H1 (cell line): ENCODE measurements at regions of chr1 and their contacts with region 1.

Region 1: GRCh38 chr1:14553711-14554110 is 44.8 kb upstream of the KAZN start:
- DNase-seq: no peak
- H3K4me3 ChIP-seq: no peak overlapping the region
- H3K27ac ChIP-seq: no peak overlapping the region
- H3K4me1 ChIP-seq: peaks cover 0 to 4% (median 3%) of the 10 kb centered on the region in 4 experiments; a peak in 3 of 7 replicates
- H3K27me3 ChIP-seq: no peaks in the 10 kb centered on the region
- CTCF ChIP-seq: no peak
- EP300 ChIP-seq: no peak
- POLR2A ChIP-seq: no peak
- RAD21 ChIP-seq: no peak

Region 2: GRCh38 chr1:14390816-14391215 is 162.9 kb before region 1 on chr1:
- CTCF ChIA-PET with region 1: no interaction called
- POLR2A ChIA-PET with region 1: no interaction called
- DNase-seq: no peak
- H3K4me3 ChIP-seq: no peak overlapping the region
- H3K27ac ChIP-seq: no peak overlapping the region
- H3K4me1 ChIP-seq: no peaks in the 10 kb centered on the region
- H3K27me3 ChIP-seq: no peaks in the 10 kb centered on the region
- CTCF ChIP-seq: no peak
- EP300 ChIP-seq: no peak
- POLR2A ChIP-seq: no peak
- RAD21 ChIP-seq: no peak

Region 3: GRCh38 chr1:14441302-14441741 is 112.4 kb before region 1 on chr1:
- CTCF ChIA-PET with region 1: no interaction called
- POLR2A ChIA-PET with region 1: no interaction called
- DNase-seq: no peak
- H3K4me3 ChIP-seq: no peak overlapping the region
- H3K27ac ChIP-seq: no peak overlapping the region
- H3K4me1 ChIP-seq: no peaks in the 10 kb centered on the region
- H3K27me3 ChIP-seq: no peaks in the 10 kb centered on the region; a peak in 2 of 7 replicates
- CTCF ChIP-seq: no peak
- EP300 ChIP-seq: no peak
- POLR2A ChIP-seq: no peak
- RAD21 ChIP-seq: no peak

Region 4: DNA sequence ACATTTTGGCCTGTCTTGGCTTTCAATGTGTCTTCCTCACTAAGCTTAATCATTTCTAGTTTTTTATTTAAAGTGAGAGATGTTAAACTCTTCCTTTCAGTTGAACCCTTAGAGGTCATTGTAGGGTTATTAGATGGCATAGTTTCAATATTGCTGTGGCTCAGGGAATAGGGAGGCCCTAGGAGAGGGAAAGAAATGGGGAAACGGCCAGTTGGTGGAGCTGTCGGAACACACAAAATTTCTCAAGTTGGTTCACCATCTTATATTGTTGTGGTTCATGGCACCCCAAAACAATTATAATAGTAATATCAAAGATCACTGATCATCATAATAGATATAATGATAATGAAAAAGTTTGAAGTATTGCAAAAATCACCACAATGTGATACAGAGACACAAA is 13.3 kb after region 1 on chr1:
- CTCF ChIA-PET with region 1: interaction called, 19 read pairs
- POLR2A ChIA-PET with region 1: interaction called, 3 read pairs
- DNase-seq: peak; percentile 10 to 63
- H3K4me3 ChIP-seq: no peak overlapping the region
- H3K27ac ChIP-seq: no peak overlapping the region
- H3K4me1 ChIP-seq: peaks cover 0 to 4% (median 0%) of the 10 kb centered on the region in 4 experiments; a peak in 2 of 7 replicates
- H3K27me3 ChIP-seq: no peaks in the 10 kb centered on the region
- CTCF ChIP-seq: peak; percentile 33 to 62 (median 60)
- EP300 ChIP-seq: no peak
- POLR2A ChIP-seq: no peak
- RAD21 ChIP-seq: peak; percentile 80